Ascending aorta (tissue), 2 donors: ENCODE measurements at regions of chr16 and their contacts with region 1.

Region 1: GRCh38 chr16:88569985-88570690 is at the start of gene ZC3H18:
- DNase-seq: peak; percentile 77 to 97
- H3K4me3 ChIP-seq: peak within 1 kb of the TSS; percentile 79 to 98
- H3K27ac ChIP-seq: peak within 1 kb of the TSS; percentile 79 to 83
- H3K4me1 ChIP-seq: peaks cover 10 to 17% of the 10 kb centered on the region in 2 donors
- H3K27me3 ChIP-seq: no peaks in the 10 kb centered on the region
- CTCF ChIP-seq: no peak
- total RNA-seq, gene ZC3H18: 36.3 TPM

Region 2: GRCh38 chr16:87982491-87983415 is 587.4 kb before region 1 on chr16:
- intact Hi-C with region 1: loop called (anchors 10 kb)
- DNase-seq: peak in 1 of 2 donors; percentile 55
- H3K4me3 ChIP-seq: no peak overlapping the region
- H3K27ac ChIP-seq: no peak overlapping the region
- H3K4me1 ChIP-seq: no peaks in the 10 kb centered on the region
- H3K27me3 ChIP-seq: no peaks in the 10 kb centered on the region
- CTCF ChIP-seq: no peak

Region 3: GRCh38 chr16:88459366-88460073 is 110.6 kb before region 1 on chr16:
- intact Hi-C with region 1: no loop called
- DNase-seq: no peak
- H3K4me3 ChIP-seq: no peak overlapping the region
- H3K27ac ChIP-seq: no peak overlapping the region
- H3K4me1 ChIP-seq: peaks cover 0 to 13% of the 10 kb centered on the region in 2 donors
- H3K27me3 ChIP-seq: no peaks in the 10 kb centered on the region
- CTCF ChIP-seq: no peak

Region 4: DNA sequence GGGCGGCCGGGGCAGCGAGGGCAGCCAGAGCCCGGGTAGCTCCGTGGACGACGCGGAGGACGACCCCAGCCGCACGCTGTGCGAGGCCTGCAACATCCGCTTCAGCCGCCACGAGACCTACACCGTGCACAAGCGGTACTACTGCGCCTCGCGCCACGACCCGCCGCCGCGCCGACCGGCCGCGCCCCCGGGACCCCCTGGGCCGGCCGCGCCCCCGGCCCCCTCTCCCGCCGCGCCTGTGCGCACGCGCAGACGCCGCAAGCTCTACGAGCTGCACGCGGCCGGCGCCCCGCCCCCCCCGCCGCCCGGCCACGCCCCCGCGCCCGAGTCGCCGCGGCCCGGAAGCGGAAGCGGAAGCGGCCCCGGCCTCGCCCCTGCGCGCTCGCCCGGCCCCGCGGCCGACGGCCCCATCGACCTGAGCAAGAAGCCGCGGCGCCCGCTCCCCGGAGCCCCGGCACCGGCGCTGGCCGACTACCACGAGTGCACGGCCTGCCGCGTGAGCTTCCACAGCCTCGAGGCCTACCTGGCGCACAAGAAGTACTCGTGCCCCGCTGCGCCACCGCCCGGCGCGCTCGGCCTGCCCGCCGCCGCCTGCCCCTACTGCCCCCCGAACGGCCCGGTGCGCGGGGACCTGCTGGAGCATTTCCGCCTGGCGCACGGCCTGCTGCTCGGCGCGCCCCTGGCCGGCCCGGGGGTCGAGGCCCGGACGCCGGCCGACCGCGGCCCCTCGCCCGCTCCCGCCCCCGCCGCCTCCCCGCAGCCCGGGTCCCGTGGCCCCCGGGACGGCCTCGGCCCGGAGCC is 36.0 kb before region 1 on chr16:
- intact Hi-C with region 1: loop called (anchors 2 kb)
- DNase-seq: peak in 1 of 2 donors; percentile 85
- H3K4me3 ChIP-seq: peak overlapping the region; percentile 80 to 94
- H3K27ac ChIP-seq: peak overlapping the region; percentile 73 to 81
- H3K4me1 ChIP-seq: peaks cover 0 to 12% of the 10 kb centered on the region in 2 donors
- H3K27me3 ChIP-seq: no peaks in the 10 kb centered on the region
- CTCF ChIP-seq: no peak

Region 5: DNA sequence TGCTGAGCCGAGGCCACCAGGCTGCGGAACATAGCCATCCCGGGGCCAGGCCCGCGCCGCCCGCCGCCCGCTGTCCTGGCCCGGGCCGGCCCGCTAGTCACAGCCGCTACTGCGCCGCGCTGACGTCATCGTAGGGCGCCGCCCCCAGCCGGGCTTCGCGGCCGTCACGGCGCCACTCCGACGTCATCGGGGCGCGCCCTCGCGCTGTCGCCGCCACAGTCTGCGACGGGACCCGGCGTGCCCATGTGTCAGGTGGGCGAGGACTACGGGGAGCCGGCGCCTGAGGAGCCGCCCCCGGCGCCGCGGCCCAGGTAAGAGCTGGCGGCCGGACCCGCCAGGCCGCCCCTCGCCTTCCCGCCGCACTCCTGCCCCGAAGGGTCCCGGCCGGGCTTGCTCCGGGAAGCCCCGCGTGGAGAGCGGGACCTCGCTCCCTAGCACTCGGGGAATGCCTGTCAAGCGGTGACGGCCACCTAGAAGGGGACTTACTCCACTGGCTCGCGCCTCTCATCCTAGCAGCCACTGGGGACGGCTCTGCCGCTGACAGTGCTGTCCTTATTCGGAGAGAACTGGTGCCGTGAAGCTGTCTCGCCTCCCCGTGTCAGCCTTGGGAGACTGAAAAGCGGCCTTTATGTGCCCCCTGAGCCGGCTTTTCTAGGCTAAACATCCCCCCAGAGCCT is 136.3 kb after region 1 on chr16 and contains the starts of genes CTU2 and RNF166:
- intact Hi-C with region 1: loop called (anchors 1 kb)
- DNase-seq: peak; percentile 64 to 94
- H3K4me3 ChIP-seq: peak within 1 kb of the TSS; percentile 94 to 98
- H3K27ac ChIP-seq: peak within 1 kb of the TSS; percentile 73 to 81
- H3K4me1 ChIP-seq: peaks cover 9 to 21% of the 10 kb centered on the region in 2 donors
- H3K27me3 ChIP-seq: no peaks in the 10 kb centered on the region
- CTCF ChIP-seq: no peak
- total RNA-seq, gene CTU2: 4.2 TPM
- total RNA-seq, gene RNF166: 44.3 TPM

Region 6: GRCh38 chr16:88790312-88791211 is 220.4 kb after region 1 on chr16:
- intact Hi-C with region 1: no loop called
- DNase-seq: no peak
- H3K4me3 ChIP-seq: no peak overlapping the region
- H3K27ac ChIP-seq: no peak overlapping the region
- H3K4me1 ChIP-seq: peaks cover 0 to 3% of the 10 kb centered on the region in 2 donors
- H3K27me3 ChIP-seq: no peaks in the 10 kb centered on the region
- CTCF ChIP-seq: no peak

Region 7: DNA sequence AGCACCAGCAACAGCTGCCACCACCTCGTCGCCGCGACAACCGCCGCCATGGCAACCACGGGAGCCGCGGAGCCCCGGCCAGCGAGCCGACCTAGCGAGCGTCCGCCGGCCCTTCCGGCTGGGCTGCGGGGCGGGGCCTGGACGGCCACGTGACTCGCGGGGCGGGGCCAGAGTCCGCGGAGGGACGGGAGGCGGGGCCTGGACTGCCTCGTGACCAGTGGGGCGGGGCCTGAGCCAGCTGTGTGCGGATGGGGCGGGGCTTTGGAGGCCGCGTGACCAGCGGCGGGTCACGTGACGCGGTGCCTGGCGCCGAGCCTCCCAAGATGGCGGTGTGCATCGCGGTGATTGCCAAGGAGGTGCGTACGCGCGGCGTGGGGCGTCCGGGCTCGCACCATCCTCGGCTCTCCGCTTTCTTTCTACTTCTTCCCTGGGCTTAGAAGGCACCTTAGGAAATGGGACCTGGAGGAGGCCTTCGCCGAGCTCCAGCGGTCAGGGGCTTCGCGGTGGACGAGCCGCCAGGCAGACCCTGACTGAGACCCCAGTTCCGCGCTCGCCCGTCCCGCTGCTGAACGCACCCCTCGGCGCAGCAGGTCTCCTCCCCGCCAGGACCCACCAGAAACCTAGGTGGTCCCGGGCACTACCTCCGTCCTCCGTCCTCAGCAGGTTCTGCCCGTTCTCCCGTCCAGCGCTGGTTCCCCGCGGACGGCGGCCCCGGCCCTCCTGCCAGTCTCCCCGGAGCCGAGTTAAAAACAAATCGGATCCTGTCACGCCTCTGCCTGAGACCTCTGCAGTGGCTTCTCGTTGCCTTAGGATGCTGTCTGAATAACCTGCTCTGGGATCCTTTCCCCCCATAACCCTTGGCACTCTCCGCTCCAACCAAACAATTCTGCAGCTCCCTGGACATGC is 286.9 kb after region 1 on chr16 and contains the starts of genes GALNS and TRAPPC2L:
- intact Hi-C with region 1: loop called (anchors 2 kb)
- DNase-seq: peak; percentile 92 to 99
- H3K4me3 ChIP-seq: peak within 1 kb of the TSS; percentile 64 to 87
- H3K27ac ChIP-seq: peak within 1 kb of the TSS; percentile 54 to 66
- H3K4me1 ChIP-seq: peaks cover 13 to 14% of the 10 kb centered on the region in 2 donors
- H3K27me3 ChIP-seq: no peaks in the 10 kb centered on the region
- CTCF ChIP-seq: no peak
- total RNA-seq, gene GALNS: 62.2 TPM
- total RNA-seq, gene TRAPPC2L: 7.6 TPM